ENCODE measurements at regions of chr13 and their contacts with region 1.

Region 1: DNA sequence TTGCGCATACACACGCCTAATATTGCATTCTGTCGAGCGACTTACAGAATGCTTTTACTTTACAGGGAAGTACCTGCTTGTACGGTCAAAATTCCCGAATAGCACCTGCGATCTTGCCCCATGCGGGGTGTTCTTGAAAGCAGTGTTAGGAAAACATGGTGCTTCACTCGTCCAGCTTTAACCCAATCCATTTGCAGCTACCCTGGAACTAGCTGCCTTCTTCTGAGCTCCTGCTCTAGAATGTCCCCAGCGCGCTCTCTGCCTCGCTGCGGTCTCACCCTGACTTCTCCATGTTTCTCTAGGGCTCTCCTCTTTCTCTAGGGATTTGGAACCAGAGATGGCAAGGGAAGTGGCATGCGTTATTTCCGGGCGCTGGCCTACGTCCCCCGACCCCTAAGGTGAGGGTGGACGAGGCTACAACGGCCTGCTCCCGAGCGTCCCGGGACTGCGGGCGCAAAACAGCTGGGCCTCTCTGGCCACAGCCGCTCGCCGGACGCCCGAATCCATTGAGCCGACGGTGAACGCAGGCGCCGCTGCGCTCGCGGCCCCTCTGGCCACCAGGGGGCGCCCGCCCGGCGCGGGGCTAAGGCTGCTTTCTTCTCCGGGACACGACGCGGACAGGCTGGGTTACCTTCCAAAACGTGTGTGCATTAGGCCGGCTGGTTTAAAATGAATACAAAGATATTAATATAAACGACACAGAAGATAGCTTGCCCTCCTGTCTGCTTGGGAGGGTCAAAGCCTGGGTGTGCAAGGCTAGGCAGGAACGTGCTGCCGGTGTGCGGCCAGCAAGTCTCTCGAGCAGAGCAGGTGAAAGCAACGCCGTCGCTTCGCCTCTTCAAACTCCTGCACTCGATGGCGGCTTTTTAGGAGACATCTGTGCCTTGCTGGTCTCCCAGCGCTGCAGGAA is 1.8 kb upstream of the SPRY2 start:
- DNase-seq: peak; percentile 86 to 91
- ATAC-seq: peak; percentile 36 to 64 (median 54)
- H3K4me3 ChIP-seq: peak overlapping the region; percentile 16 to 96 (median 85)
- H3K27ac ChIP-seq: peak overlapping the region; percentile 96 to 99 (median 98)
- H3K4me1 ChIP-seq: peaks cover 0 to 36% (median 26%) of the 10 kb centered on the region in 9 donors
- H3K27me3 ChIP-seq: no peaks in the 10 kb centered on the region
- CTCF ChIP-seq: peak; percentile 35 to 100 (median 99)

Region 2: GRCh38 chr13:79679334-79679733 is 663.4 kb before region 1 on chr13:
- intact Hi-C with region 1: loop called in 4 of 10 experiments (anchors 10 kb)
- DNase-seq: peak; percentile 44 to 77
- ATAC-seq: peak; percentile 53 to 76 (median 63)
- H3K4me3 ChIP-seq: no peak overlapping the region
- H3K27ac ChIP-seq: no peak overlapping the region
- H3K4me1 ChIP-seq: peaks cover 0 to 17% (median 0%) of the 10 kb centered on the region in 9 donors
- H3K27me3 ChIP-seq: no peaks in the 10 kb centered on the region
- CTCF ChIP-seq: peak; percentile 56 to 85 (median 78)

Region 3: GRCh38 chr13:79918620-79919019 is 424.1 kb before region 1 on chr13:
- intact Hi-C with region 1: loop called in 1 of 10 experiments (anchors 10 kb)
- DNase-seq: no peak
- ATAC-seq: no peak
- H3K4me3 ChIP-seq: no peak overlapping the region
- H3K27ac ChIP-seq: peak overlapping the region in 2 of 10 donors; percentile 11 to 28
- H3K4me1 ChIP-seq: peaks cover 0 to 25% (median 7%) of the 10 kb centered on the region in 9 donors
- H3K27me3 ChIP-seq: no peaks in the 10 kb centered on the region
- CTCF ChIP-seq: no peak

Region 4: DNA sequence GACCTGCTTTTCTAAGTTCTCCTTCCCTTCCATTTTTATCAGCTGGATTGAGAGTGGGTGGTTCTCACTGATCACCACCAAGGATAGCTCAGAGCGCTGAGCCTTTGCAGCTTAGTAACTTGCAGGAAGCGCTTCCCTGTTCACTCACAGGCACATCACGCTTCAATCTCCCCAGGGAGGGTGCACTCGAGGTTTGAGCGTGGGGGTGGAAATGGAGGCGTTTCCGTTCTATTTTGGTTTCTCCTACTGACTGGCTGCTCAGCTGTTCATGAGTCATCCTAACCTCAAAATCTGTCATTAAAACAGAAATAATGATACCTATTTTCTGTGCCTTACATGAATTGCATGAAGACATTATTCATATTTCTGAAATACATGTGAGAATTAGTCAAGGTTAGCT is 293.9 kb before region 1 on chr13:
- intact Hi-C with region 1: loop called in 1 of 10 experiments (anchors 10 kb)
- DNase-seq: peak; percentile 69 to 93
- ATAC-seq: peak; percentile 95 to 100 (median 99)
- H3K4me3 ChIP-seq: no peak overlapping the region
- H3K27ac ChIP-seq: peak overlapping the region in 8 of 10 donors; percentile 8 to 74 (median 55)
- H3K4me1 ChIP-seq: peaks cover 6 to 35% (median 29%) of the 10 kb centered on the region in 9 donors
- H3K27me3 ChIP-seq: no peaks in the 10 kb centered on the region
- CTCF ChIP-seq: no peak

Region 5: DNA sequence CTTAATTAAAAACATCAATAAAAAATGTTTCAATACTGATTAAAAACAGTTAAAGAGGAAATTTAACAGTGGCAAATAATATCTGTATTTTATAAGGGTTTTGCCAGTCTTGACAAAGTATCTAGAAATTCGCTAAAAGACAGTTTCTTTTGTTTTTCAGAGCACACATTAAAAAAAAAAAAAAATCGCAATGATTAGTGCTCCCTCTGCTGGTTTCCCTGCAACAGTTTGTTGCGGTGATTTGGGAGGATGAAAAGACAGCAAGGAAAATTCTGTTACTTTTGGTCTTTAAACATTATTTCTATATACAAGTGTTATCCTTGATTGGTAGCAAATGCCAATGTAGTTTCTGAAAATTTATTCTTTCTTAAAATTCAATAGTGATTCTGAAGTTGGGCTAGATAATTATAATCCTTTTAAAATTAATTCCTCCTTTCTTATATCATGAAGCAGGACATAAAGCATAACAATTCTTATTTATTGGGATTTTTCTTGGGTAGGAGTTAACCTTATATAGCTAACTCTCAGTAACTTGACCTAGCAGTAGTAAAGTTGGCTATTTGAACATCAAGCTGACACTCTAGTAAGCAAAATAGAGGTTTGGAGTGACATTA is 21.3 kb after region 1 on chr13:
- intact Hi-C with region 1: loop called in 2 of 10 experiments (anchors 2 kb)
- DNase-seq: no peak
- ATAC-seq: peak in 1 of 8 donors; percentile 36
- H3K4me3 ChIP-seq: peak overlapping the region in 6 of 10 donors; percentile 9 to 35 (median 28)
- H3K27ac ChIP-seq: peak overlapping the region in 4 of 10 donors; percentile 7 to 50 (median 39)
- H3K4me1 ChIP-seq: peaks cover 0 to 28% (median 19%) of the 10 kb centered on the region in 9 donors
- H3K27me3 ChIP-seq: no peaks in the 10 kb centered on the region
- CTCF ChIP-seq: peak; percentile 53 to 93 (median 83)

Region 6: GRCh38 chr13:80604098-80604497 is 261.4 kb after region 1 on chr13:
- intact Hi-C with region 1: loop called in 1 of 10 experiments (anchors 10 kb)
- DNase-seq: peak in 1 of 2 donors; percentile 39
- ATAC-seq: peak in 7 of 8 donors; percentile 67 to 88 (median 80)
- H3K4me3 ChIP-seq: no peak overlapping the region
- H3K27ac ChIP-seq: peak overlapping the region in 9 of 10 donors; percentile 14 to 65 (median 35)
- H3K4me1 ChIP-seq: peaks cover 0 to 18% (median 5%) of the 10 kb centered on the region in 9 donors
- H3K27me3 ChIP-seq: no peaks in the 10 kb centered on the region
- CTCF ChIP-seq: peak in 5 of 9 donors; percentile 14 to 48 (median 35)